Posterior vena cava (tissue), 2 donors: ENCODE measurements at regions of chr3 and their contacts with region 1.

Region 1: GRCh38 chr3:190886945-190887344 is 24.5 kb upstream of the GMNC start:
- DNase-seq: no peak

Region 2: DNA sequence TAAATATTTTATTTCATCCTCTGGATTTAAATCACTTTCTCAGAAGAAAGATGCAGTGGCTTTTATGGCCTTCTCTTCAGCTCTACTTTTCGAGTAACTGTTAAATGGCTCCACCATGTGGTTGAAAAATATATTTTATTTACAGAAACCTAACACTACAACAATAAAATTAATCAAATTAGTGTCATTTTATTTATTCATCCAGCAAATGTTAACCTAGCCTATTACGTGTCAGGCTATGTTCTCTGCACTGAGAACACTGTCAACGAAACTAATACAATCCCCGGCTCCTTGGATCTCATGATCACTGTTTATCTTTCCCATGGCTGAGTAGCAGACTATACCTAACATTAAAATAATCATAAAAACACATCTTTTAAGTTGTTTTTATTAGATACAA is 164.1 kb after region 1 on chr3:
- intact Hi-C with region 1: loop called in 1 of 2 experiments (anchors 5 kb)
- DNase-seq: no peak